Gastrocnemius medialis (tissue), 4 donors: ENCODE measurements at regions of chr19 and their contacts with region 1.

Region 1: GRCh38 chr19:7799640-7800355 is 30.2 kb upstream of the EVI5L start:
- DNase-seq: peak; percentile 20 to 28
- ATAC-seq: no peak
- H3K4me3 ChIP-seq: peak overlapping the region in 1 of 4 donors; percentile 34
- H3K27ac ChIP-seq: no peak overlapping the region
- H3K4me1 ChIP-seq: no peaks in the 10 kb centered on the region
- H3K27me3 ChIP-seq: peaks cover 19 to 30% (median 28%) of the 10 kb centered on the region in 3 donors
- CTCF ChIP-seq: peak in 4 of 5 experiments; percentile 29 to 70 (median 54)
- POLR2A ChIP-seq: no peak

Region 2: GRCh38 chr19:7098701-7099596 is 700.8 kb before region 1 on chr19:
- in situ Hi-C with region 1: loop called in 1 of 4 experiments (anchors 25 kb)
- intact Hi-C with region 1: no loop called
- DNase-seq: peak; percentile 84 to 89
- ATAC-seq: peak; percentile 94 to 95
- H3K4me3 ChIP-seq: peak overlapping the region; percentile 73 to 92 (median 78)
- H3K27ac ChIP-seq: peak overlapping the region; percentile 92 to 99 (median 94)
- H3K4me1 ChIP-seq: peaks cover 0 to 9% of the 10 kb centered on the region in 2 donors
- H3K27me3 ChIP-seq: no peaks in the 10 kb centered on the region
- CTCF ChIP-seq: no peak
- POLR2A ChIP-seq: no peak

Region 3: GRCh38 chr19:7366701-7367420 is 432.9 kb before region 1 on chr19:
- in situ Hi-C with region 1: loop called in 2 of 4 experiments (anchors 25 kb)
- intact Hi-C with region 1: no loop called
- DNase-seq: no peak
- ATAC-seq: no peak
- H3K4me3 ChIP-seq: no peak overlapping the region
- H3K27ac ChIP-seq: no peak overlapping the region
- H3K4me1 ChIP-seq: no peaks in the 10 kb centered on the region
- H3K27me3 ChIP-seq: no peaks in the 10 kb centered on the region
- CTCF ChIP-seq: no peak
- POLR2A ChIP-seq: no peak

Region 4: GRCh38 chr19:7562646-7563393 is 237.0 kb before region 1 on chr19:
- in situ Hi-C with region 1: loop called in 3 of 4 experiments (anchors 5 to 10 kb)
- intact Hi-C with region 1: no loop called
- DNase-seq: no peak
- ATAC-seq: no peak
- H3K4me3 ChIP-seq: no peak overlapping the region
- H3K27ac ChIP-seq: no peak overlapping the region
- H3K4me1 ChIP-seq: no peaks in the 10 kb centered on the region
- H3K27me3 ChIP-seq: no peaks in the 10 kb centered on the region
- CTCF ChIP-seq: no peak
- POLR2A ChIP-seq: no peak

Region 5: GRCh38 chr19:7570761-7571160 is 229.0 kb before region 1 on chr19:
- in situ Hi-C with region 1: loop called (anchors 5 to 10 kb)
- intact Hi-C with region 1: no loop called
- DNase-seq: no peak
- ATAC-seq: no peak
- H3K4me3 ChIP-seq: no peak overlapping the region
- H3K27ac ChIP-seq: no peak overlapping the region
- H3K4me1 ChIP-seq: no peaks in the 10 kb centered on the region
- H3K27me3 ChIP-seq: no peaks in the 10 kb centered on the region
- CTCF ChIP-seq: no peak
- POLR2A ChIP-seq: no peak

Region 6: GRCh38 chr19:7652061-7652641 is 147.6 kb before region 1 on chr19:
- in situ Hi-C with region 1: loop called in 1 of 4 experiments (anchors 10 kb)
- intact Hi-C with region 1: no loop called
- DNase-seq: peak; percentile 74 to 88
- ATAC-seq: peak; percentile 100
- H3K4me3 ChIP-seq: peak overlapping the region in 2 of 4 donors; percentile 15 to 34
- H3K27ac ChIP-seq: peak overlapping the region; percentile 50 to 84 (median 70)
- H3K4me1 ChIP-seq: peaks cover 0 to 4% of the 10 kb centered on the region in 2 donors
- H3K27me3 ChIP-seq: no peaks in the 10 kb centered on the region
- CTCF ChIP-seq: peak; percentile 93 to 99 (median 98)
- POLR2A ChIP-seq: no peak

Region 7: DNA sequence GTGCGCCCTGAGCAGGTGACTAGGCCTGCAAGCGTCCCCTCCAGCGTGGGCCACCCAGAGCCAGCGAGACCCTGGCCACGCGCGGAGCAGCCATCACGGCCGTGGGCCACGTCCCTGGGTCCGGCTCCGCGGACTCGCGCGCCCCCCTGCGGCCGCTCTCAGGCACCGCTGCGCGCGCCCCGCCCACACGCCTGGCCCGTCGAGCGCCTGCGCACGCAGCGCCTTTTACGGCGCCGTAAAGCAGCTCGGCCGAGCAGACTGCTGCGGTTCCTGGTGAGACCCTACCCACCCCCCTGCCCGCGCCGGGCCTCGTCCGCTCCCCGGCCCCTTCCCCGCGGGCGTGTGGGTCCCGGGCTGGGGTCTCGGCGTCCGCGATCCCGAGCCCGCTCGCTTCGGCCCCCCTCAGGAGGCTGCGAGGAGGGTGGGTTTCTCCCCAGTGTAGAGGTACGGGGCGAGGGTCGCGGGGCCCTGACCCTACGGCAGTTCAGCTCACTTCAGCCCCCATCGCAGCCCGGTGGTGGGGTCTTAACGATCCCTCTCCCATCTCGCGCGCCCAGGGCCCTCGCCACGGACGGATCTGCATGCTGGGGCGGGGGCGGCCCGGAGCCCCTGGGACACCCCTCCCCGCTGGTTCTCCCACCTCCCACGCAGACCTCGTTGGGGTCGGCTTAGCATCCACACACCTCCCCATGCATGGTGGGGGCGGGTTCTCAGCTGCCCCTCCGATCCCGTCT is 119.0 kb before region 1 on chr19 and contains the start of gene TRAPPC5:
- in situ Hi-C with region 1: no loop called
- intact Hi-C with region 1: loop called (anchors 2 kb)
- DNase-seq: peak; percentile 55 to 77
- ATAC-seq: peak; percentile 86 to 91
- H3K4me3 ChIP-seq: peak within 1 kb of the TSS; percentile 91 to 100 (median 94)
- H3K27ac ChIP-seq: peak within 1 kb of the TSS; percentile 83 to 94 (median 92)
- H3K4me1 ChIP-seq: peaks cover 4 to 9% of the 10 kb centered on the region in 2 donors
- H3K27me3 ChIP-seq: peaks cover 0 to 10% (median 0%) of the 10 kb centered on the region in 3 donors
- CTCF ChIP-seq: peak in 4 of 5 experiments; percentile 80 to 100 (median 99)
- POLR2A ChIP-seq: peak; percentile 60 to 77
- total RNA-seq, gene TRAPPC5: 109 to 146 (median 126) TPM

Region 8: DNA sequence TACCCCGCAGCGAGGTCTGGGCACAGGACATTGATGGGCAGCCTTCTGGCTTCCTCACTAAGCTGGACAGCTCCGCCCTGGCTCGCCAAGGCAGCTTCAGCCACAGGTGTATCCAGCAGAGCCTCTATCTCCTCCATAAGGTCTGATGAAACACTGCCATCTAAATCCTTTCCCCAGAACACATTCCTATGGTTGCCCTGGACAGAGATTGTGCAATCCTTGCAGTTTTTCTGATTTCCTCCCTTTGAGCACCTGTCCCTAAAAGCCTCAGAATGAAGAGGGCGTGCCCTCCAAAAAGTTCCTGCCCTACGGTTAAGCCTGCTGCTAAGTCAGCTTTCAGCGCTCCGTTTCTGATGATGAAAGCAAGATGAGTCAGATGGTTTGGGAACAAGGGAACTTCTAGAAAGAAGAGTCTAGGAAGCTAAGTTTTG is 15.8 kb before region 1 on chr19:
- in situ Hi-C with region 1: no loop called
- intact Hi-C with region 1: no loop called
- DNase-seq: no peak
- ATAC-seq: no peak
- H3K4me3 ChIP-seq: no peak overlapping the region
- H3K27ac ChIP-seq: no peak overlapping the region
- H3K4me1 ChIP-seq: no peaks in the 10 kb centered on the region
- H3K27me3 ChIP-seq: peaks cover 17 to 28% (median 23%) of the 10 kb centered on the region in 3 donors
- CTCF ChIP-seq: no peak
- POLR2A ChIP-seq: no peak

Region 9: DNA sequence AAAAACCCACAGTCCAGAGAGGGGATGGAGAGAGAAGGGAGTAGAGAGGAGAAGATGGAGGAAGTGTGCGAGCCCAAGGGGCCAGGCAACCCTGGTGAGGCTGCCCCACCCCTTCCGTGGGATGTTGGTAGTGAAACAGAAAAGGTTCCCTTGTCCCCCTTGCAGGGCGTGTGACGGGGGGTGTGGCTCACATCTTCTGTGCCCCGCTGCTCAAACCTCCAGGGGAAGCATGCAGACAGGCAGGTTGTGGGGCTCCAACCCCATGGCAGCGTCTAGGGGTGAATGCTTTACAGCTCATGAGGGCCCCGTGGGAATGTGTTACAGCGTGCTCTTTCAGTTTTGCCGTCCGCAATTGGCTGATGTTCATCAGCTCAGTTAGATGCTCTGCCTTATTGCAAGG is 15.5 kb after region 1 on chr19:
- in situ Hi-C with region 1: no loop called
- intact Hi-C with region 1: no loop called
- DNase-seq: no peak
- ATAC-seq: no peak
- H3K4me3 ChIP-seq: no peak overlapping the region
- H3K27ac ChIP-seq: no peak overlapping the region
- H3K4me1 ChIP-seq: no peaks in the 10 kb centered on the region
- H3K27me3 ChIP-seq: peaks cover 3 to 18% (median 4%) of the 10 kb centered on the region in 3 donors
- CTCF ChIP-seq: no peak
- POLR2A ChIP-seq: no peak